Activated CD4-positive, alpha-beta T cell treated with anti-CD3 and anti-CD28 coated beads, Interleukin-2, amount 10 ng/mL, durations not matched to agents 24 days and 14 days (primary cell): ENCODE measurements at regions of chr14 and their contacts with region 1.

Region 1: DNA sequence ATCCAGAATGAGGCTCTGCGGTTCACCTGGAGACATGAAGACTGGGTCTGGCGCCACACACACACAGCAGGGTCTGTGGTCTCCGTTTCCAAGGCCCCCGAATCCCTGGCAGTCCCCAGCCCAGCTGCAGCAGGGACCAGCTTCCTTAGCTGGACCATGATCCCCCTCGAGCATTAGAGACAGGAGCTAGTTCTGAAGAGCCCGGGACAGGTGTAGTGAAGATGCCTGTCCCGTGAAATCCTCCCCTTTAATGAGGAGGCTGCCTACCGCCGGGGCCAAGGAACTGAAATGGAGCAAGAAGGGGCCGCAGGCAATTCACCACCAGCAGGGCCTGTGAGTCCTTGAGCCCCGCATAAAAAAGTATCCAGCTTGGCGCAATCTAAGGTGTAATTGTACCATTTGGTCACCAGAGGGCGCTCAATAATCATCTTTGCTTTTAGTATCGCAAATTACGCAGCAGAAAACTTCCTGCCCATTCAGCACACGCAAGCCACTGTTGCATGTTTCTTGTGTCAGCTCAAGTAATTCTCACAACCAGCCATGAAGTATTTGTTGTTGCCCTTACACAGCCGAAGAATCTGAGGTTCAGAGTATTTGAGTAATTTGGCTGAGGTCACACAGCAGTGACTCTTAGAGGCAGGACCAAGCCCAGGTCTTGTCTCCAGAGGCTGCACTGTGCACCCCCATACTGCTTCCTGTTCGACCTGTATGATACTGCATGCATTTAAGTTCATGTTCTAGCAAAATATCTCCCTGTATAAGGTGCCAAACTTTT is 54.3 kb upstream of the PPP2R5C start:
- DNase-seq: peak; percentile 92
- H3K4me3 Mint-ChIP-seq: peak overlapping the region; percentile 56
- H3K27ac Mint-ChIP-seq: peak overlapping the region; percentile 79
- H3K4me1 Mint-ChIP-seq: peaks cover 24% of the 10 kb centered on the region
- H3K27me3 Mint-ChIP-seq: peaks cover 21% of the 10 kb centered on the region

Region 2: GRCh38 chr14:100950024-100950423 is 757.2 kb before region 1 on chr14:
- intact Hi-C with region 1: no loop called
- DNase-seq: no peak
- H3K4me3 Mint-ChIP-seq: no peak overlapping the region
- H3K27ac Mint-ChIP-seq: no peak overlapping the region
- H3K4me1 Mint-ChIP-seq: no peaks in the 10 kb centered on the region
- H3K27me3 Mint-ChIP-seq: peaks cover 7% of the 10 kb centered on the region

Region 3: DNA sequence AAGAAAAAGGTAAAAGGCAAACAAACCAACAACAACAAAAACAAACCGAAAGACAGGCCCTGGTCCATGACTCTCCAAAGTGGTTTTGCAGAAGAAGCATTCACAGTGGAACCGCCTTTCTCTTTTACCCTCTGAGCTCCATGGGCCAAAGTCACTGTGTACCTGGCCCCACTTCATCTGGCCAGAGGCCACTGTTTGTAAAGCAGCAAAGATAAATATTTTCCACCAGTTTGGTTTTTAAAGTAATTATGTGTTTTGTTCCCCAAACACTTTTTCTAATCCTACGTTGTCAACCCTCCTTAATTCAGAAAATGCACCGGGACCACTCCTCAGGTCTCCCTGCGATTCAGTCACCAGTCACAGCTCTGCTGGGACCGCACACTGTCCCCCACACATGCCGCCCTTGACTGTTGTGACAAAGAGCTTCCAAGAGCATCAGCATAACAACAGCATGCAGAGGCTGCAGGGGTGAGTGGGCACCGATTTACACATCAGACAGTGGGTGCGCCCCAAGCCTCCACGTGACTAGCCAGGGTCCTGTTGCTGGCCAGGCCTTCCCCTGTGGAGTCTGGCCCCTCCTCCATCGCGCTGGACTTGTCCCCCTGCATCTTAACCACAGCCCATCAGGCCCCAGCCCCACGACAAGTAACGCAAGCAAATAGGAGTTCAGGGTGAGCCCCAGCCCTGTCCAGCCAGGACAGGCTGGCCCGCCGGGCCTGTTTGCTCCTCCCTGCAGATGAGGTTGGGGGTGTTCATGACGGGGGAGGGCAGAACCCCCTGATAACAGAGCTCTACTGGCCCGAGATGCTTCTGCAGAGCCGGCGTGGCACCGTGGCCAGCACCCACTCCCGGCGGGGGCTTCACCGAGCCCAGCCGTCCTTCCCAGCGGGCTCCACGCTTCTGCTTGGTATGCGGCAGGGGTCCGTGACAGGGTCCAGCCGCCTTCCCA is 211.2 kb before region 1 on chr14:
- intact Hi-C with region 1: no loop called
- DNase-seq: no peak
- H3K4me3 Mint-ChIP-seq: no peak overlapping the region
- H3K27ac Mint-ChIP-seq: no peak overlapping the region
- H3K4me1 Mint-ChIP-seq: no peaks in the 10 kb centered on the region
- H3K27me3 Mint-ChIP-seq: peaks cover 2% of the 10 kb centered on the region

Region 4: GRCh38 chr14:101761032-101761880 is 54.0 kb after region 1 on chr14 and contains the start of gene PPP2R5C:
- intact Hi-C with region 1: loop called (anchors 1 kb)
- DNase-seq: peak; percentile 94
- H3K4me3 Mint-ChIP-seq: peak within 1 kb of the TSS; percentile 90
- H3K27ac Mint-ChIP-seq: peak within 1 kb of the TSS; percentile 86
- H3K4me1 Mint-ChIP-seq: peaks cover 39% of the 10 kb centered on the region
- H3K27me3 Mint-ChIP-seq: peaks cover 3% of the 10 kb centered on the region
- total RNA-seq, gene PPP2R5C: 160 and 181 TPM in 2 replicates

Region 5: GRCh38 chr14:101780887-101781239 is 73.6 kb after region 1 on chr14:
- intact Hi-C with region 1: no loop called
- DNase-seq: no peak
- H3K4me3 Mint-ChIP-seq: peak overlapping the region; percentile 77
- H3K27ac Mint-ChIP-seq: peak overlapping the region; percentile 36
- H3K4me1 Mint-ChIP-seq: peaks cover 17% of the 10 kb centered on the region
- H3K27me3 Mint-ChIP-seq: peaks cover 15% of the 10 kb centered on the region

Region 6: GRCh38 chr14:101791919-101792572 is 84.8 kb after region 1 on chr14:
- intact Hi-C with region 1: no loop called
- DNase-seq: peak; percentile 63
- H3K4me3 Mint-ChIP-seq: peak overlapping the region; percentile 64
- H3K27ac Mint-ChIP-seq: peak overlapping the region; percentile 54
- H3K4me1 Mint-ChIP-seq: peaks cover 17% of the 10 kb centered on the region
- H3K27me3 Mint-ChIP-seq: no peaks in the 10 kb centered on the region

Region 7: GRCh38 chr14:101843665-101844064 is 136.4 kb after region 1 on chr14:
- intact Hi-C with region 1: loop called (anchors 2 kb)
- DNase-seq: peak; percentile 84
- H3K4me3 Mint-ChIP-seq: no peak overlapping the region
- H3K27ac Mint-ChIP-seq: peak overlapping the region; percentile 79
- H3K4me1 Mint-ChIP-seq: peaks cover 64% of the 10 kb centered on the region
- H3K27me3 Mint-ChIP-seq: no peaks in the 10 kb centered on the region

Region 8: GRCh38 chr14:101947906-101948665 is 240.8 kb after region 1 on chr14:
- intact Hi-C with region 1: loop called (anchors 2 kb)
- DNase-seq: peak; percentile 100
- H3K4me3 Mint-ChIP-seq: peak overlapping the region; percentile 95
- H3K27ac Mint-ChIP-seq: peak overlapping the region; percentile 97
- H3K4me1 Mint-ChIP-seq: peaks cover 17% of the 10 kb centered on the region
- H3K27me3 Mint-ChIP-seq: peaks cover 22% of the 10 kb centered on the region

Region 9: GRCh38 chr14:102096214-102097114 is 389.2 kb after region 1 on chr14:
- intact Hi-C with region 1: loop called (anchors 10 kb)
- DNase-seq: peak; percentile 90
- H3K4me3 Mint-ChIP-seq: no peak overlapping the region
- H3K27ac Mint-ChIP-seq: peak overlapping the region; percentile 66
- H3K4me1 Mint-ChIP-seq: peaks cover 21% of the 10 kb centered on the region
- H3K27me3 Mint-ChIP-seq: peaks cover 2% of the 10 kb centered on the region